A549 (cell line): ENCODE measurements at regions of chr4 and their contacts with region 1.

Region 1: GRCh38 chr4:78644744-78645330 is 93.3 kb downstream of the ANXA3 start:
- DNase-seq: peak; percentile 68 to 83
- ATAC-seq: peak; percentile 80 to 83
- H3K4me3 ChIP-seq: peak overlapping the region; percentile 17; the same call in 1 of the 3 replicates
- H3K27ac ChIP-seq: peak overlapping the region; percentile 87 to 97
- H3K4me1 ChIP-seq: peaks cover 42% of the 10 kb centered on the region
- CTCF ChIP-seq: peak; percentile 54
- EP300 ChIP-seq: no peak
- POLR2A ChIP-seq: no peak
- RAD21 ChIP-seq: peak; percentile 60 to 62

Region 2: GRCh38 chr4:78634011-78634664 is 10.7 kb before region 1 on chr4:
- CTCF ChIA-PET with region 1: interaction called, 21 read pairs
- POLR2A ChIA-PET with region 1: no interaction called
- DNase-seq: no peak
- ATAC-seq: no peak
- H3K4me3 ChIP-seq: no peak overlapping the region
- H3K27ac ChIP-seq: no peak overlapping the region
- H3K4me1 ChIP-seq: no peaks in the 10 kb centered on the region
- CTCF ChIP-seq: no peak
- EP300 ChIP-seq: no peak
- POLR2A ChIP-seq: no peak
- RAD21 ChIP-seq: no peak

Region 3: DNA sequence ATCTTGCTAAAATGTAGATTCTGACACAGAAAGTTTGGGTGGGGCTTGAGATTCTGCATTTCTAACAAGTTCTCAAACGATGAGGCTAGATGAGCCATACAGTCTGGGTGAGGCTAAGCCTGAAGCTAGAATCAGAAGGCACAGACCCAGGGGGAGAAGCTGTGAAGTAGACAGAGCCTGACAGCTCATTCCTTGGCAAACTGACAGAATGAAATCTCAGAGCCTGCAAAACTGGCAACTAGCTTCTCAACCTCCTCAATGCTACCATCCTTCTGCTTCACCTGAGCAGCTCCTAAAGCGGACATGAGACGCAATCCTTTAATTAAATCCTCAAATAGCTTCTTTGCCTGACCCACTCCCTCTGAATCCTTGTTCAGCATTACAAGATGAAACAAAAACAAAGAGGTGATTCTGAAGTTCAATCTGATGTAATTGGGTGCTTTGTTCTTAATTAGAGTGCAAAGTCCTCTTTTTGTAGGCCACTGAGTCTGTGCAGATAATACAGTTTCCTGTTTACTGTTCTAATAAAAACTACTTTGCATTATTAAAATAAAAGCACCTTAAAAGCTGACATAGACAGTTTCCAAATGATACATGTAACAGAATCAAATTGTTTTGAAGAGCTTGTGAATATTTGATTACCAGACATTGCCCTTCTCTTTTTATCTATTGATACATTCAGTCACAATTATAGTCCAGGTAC is 60.3 kb after region 1 on chr4:
- CTCF ChIA-PET with region 1: no interaction called
- POLR2A ChIA-PET with region 1: no interaction called
- DNase-seq: peak in 1 of 2 experiments; percentile 3
- ATAC-seq: no peak
- H3K4me3 ChIP-seq: no peak overlapping the region
- H3K27ac ChIP-seq: no peak overlapping the region
- H3K4me1 ChIP-seq: peaks cover 7% of the 10 kb centered on the region; the same call in 2 of the 3 replicates
- CTCF ChIP-seq: no peak
- EP300 ChIP-seq: no peak
- POLR2A ChIP-seq: no peak
- RAD21 ChIP-seq: no peak

Region 4: DNA sequence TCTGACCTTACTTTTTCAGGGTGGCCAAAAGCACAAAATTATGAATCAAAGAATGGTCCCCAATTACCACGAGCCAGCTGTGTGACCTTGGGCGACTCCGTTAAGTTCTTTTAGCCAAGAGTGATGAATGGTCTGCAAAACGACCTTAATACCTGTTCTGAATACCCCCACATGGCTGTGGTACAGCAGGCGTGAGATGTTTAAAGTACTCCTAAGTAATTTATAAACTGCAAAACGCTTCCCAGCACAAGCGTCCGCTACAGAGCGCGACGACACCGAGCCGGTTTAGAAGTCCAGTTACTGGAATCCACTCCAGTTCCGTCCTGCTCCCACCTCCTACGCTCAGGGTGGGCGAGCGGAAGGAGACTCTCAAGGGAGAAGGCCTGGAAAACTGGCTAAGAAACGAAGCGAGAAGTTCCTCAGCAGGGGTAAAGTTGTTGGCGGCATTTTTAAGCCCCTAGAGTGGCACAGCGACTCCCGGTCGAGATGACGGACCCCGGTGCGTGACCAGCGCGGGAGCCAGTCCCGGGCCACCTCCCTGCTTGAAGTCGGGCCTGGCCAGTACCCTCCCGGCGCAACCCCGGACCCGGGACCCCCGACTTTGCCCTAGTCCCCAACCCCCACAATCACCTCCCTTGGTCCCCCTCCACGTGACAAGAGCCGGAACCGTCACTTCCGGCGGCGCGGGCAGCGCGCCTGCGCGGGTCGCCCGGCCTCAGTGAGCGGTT is 130.6 kb after region 1 on chr4:
- CTCF ChIA-PET with region 1: interaction called, 5 read pairs
- POLR2A ChIA-PET with region 1: interaction called, 18 read pairs
- DNase-seq: peak; percentile 51 to 78
- ATAC-seq: peak; percentile 83
- H3K4me3 ChIP-seq: peak overlapping the region; percentile 64
- H3K27ac ChIP-seq: peak overlapping the region; percentile 96 to 97
- H3K4me1 ChIP-seq: peaks cover 18% of the 10 kb centered on the region; the same call in 2 of the 3 replicates
- CTCF ChIP-seq: no peak
- EP300 ChIP-seq: no peak
- POLR2A ChIP-seq: peak; percentile 38
- RAD21 ChIP-seq: no peak